ENCODE measurements at regions of chr2 and their contacts with region 1.

Region 1: GRCh38 chr2:171522052-171522787 is at the start of gene CYBRD1:
- DNase-seq: peak; percentile 79
- ATAC-seq: peak; percentile 76
- H3K4me3 ChIP-seq: peak within 1 kb of the TSS; percentile 96
- H3K27ac ChIP-seq: peak within 1 kb of the TSS; percentile 88
- H3K4me1 ChIP-seq: peaks cover 7% of the 10 kb centered on the region
- H3K27me3 ChIP-seq: no peaks in the 10 kb centered on the region
- CTCF ChIP-seq: peak; percentile 8; the same call in 1 of the 2 replicates
- POLR2A ChIP-seq: peak; percentile 51; the same call in 1 of the 2 replicates
- RAD21 ChIP-seq: no peak
- total RNA-seq, gene CYBRD1: 103 and 119 TPM in 2 replicates

Region 2: GRCh38 chr2:171433763-171434670 is 88.2 kb before region 1 on chr2 and contains the starts of genes DCAF17 and METTL8:
- CTCF ChIA-PET with region 1: no interaction called
- POLR2A ChIA-PET with region 1: no interaction called
- dilution Hi-C with region 1: no loop called
- in situ Hi-C with region 1: no loop called
- intact Hi-C with region 1: loop called (anchors 2 kb)
- DNase-seq: peak; percentile 94
- ATAC-seq: peak; percentile 98
- H3K4me3 ChIP-seq: peak within 1 kb of the TSS; percentile 93
- H3K27ac ChIP-seq: peak within 1 kb of the TSS; percentile 81
- H3K4me1 ChIP-seq: peaks cover 9% of the 10 kb centered on the region
- H3K27me3 ChIP-seq: no peaks in the 10 kb centered on the region
- CTCF ChIP-seq: 0 out of 2 replicates have a peak, but pooled peaks have one; percentile 5
- POLR2A ChIP-seq: peak; percentile 55; the same call in 1 of the 2 replicates
- RAD21 ChIP-seq: no peak
- total RNA-seq, gene DCAF17: 13.1 and 22.8 TPM in 2 replicates
- total RNA-seq, gene METTL8: 10.6 and 20.0 TPM in 2 replicates